ENCODE measurements at regions of chr5 and their contacts with region 1.

Region 1: GRCh38 chr5:72138943-72139521 is 31.8 kb downstream of the MAP1B start:
- DNase-seq: no peak
- ATAC-seq: no peak
- H3K4me3 ChIP-seq: no peak overlapping the region
- H3K27ac ChIP-seq: no peak overlapping the region
- H3K4me1 ChIP-seq: no peaks in the 10 kb centered on the region
- H3K27me3 ChIP-seq: no peaks in the 10 kb centered on the region
- CTCF ChIP-seq: no peak

Region 2: GRCh38 chr5:71830681-71831539 is 308.1 kb before region 1 on chr5:
- CTCF ChIA-PET with region 1: no interaction called
- POLR2A ChIA-PET with region 1: no interaction called
- in situ Hi-C with region 1: no loop called
- intact Hi-C with region 1: no loop called
- DNase-seq: no peak
- ATAC-seq: no peak
- H3K4me3 ChIP-seq: no peak overlapping the region
- H3K27ac ChIP-seq: no peak overlapping the region
- H3K4me1 ChIP-seq: no peaks in the 10 kb centered on the region
- H3K27me3 ChIP-seq: no peaks in the 10 kb centered on the region
- CTCF ChIP-seq: no peak

Region 3: GRCh38 chr5:71974165-71974564 is 164.9 kb before region 1 on chr5:
- CTCF ChIA-PET with region 1: no interaction called
- POLR2A ChIA-PET with region 1: no interaction called
- in situ Hi-C with region 1: no loop called
- intact Hi-C with region 1: no loop called
- DNase-seq: no peak
- ATAC-seq: no peak
- H3K4me3 ChIP-seq: no peak overlapping the region
- H3K27ac ChIP-seq: no peak overlapping the region
- H3K4me1 ChIP-seq: no peaks in the 10 kb centered on the region
- H3K27me3 ChIP-seq: peaks cover 2% of the 10 kb centered on the region
- CTCF ChIP-seq: no peak

Region 4: DNA sequence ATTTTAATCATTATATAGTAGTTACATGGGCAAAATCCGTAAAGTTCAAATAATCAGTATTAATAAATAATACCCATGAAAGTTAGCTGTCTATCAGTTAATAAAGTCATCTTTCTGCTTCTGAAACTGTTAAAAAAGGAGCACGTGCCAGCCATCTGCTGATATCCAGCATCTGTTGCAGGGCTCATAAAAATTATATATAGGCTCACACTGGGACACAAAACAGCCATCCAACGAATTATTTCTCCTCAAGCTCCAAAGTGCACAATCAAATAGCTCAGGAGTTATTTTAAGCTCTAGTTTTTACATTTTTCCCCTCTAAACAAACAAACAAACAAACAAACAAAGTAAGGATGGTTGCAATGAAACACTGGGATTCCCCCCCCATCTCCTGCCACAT is 132.7 kb after region 1 on chr5:
- CTCF ChIA-PET with region 1: no interaction called
- POLR2A ChIA-PET with region 1: no interaction called
- in situ Hi-C with region 1: no loop called
- intact Hi-C with region 1: loop called (anchors 10 kb)
- DNase-seq: no peak
- ATAC-seq: no peak
- H3K4me3 ChIP-seq: no peak overlapping the region
- H3K27ac ChIP-seq: no peak overlapping the region
- H3K4me1 ChIP-seq: no peaks in the 10 kb centered on the region; the same call in 1 of the 2 replicates
- H3K27me3 ChIP-seq: no peaks in the 10 kb centered on the region
- CTCF ChIP-seq: no peak

Measured in Panc1 (cell line).